ENCODE measurements at regions of chrX and their contacts with region 1.

Region 1: GRCh38 chrX:103310542-103311398 is at the start of gene BEX2:
- DNase-seq: peak; percentile 68
- H3K4me3 Mint-ChIP-seq: peak within 1 kb of the TSS; percentile 75
- H3K27ac Mint-ChIP-seq: peak within 1 kb of the TSS; percentile 29
- H3K4me1 Mint-ChIP-seq: no peaks in the 10 kb centered on the region
- H3K27me3 Mint-ChIP-seq: peaks cover 13% of the 10 kb centered on the region
- total RNA-seq, gene BEX2: 3.5 and 3.7 TPM in 2 replicates

Region 2: GRCh38 chrX:103254921-103255493 is 55.8 kb before region 1 on chrX and contains the start of gene TCEAL8:
- intact Hi-C with region 1: loop called (anchors 2 kb)
- DNase-seq: peak; percentile 32
- H3K4me3 Mint-ChIP-seq: peak within 1 kb of the TSS; percentile 98
- H3K27ac Mint-ChIP-seq: peak within 1 kb of the TSS; percentile 92
- H3K4me1 Mint-ChIP-seq: peaks cover 25% of the 10 kb centered on the region
- H3K27me3 Mint-ChIP-seq: peaks cover 8% of the 10 kb centered on the region
- total RNA-seq, gene TCEAL8: 20.7 and 21.9 TPM in 2 replicates

Region 3: GRCh38 chrX:103393487-103393886 is 82.7 kb after region 1 on chrX:
- intact Hi-C with region 1: no loop called
- DNase-seq: no peak
- H3K4me3 Mint-ChIP-seq: no peak overlapping the region
- H3K27ac Mint-ChIP-seq: no peak overlapping the region
- H3K4me1 Mint-ChIP-seq: no peaks in the 10 kb centered on the region
- H3K27me3 Mint-ChIP-seq: peaks cover 5% of the 10 kb centered on the region

Region 4: DNA sequence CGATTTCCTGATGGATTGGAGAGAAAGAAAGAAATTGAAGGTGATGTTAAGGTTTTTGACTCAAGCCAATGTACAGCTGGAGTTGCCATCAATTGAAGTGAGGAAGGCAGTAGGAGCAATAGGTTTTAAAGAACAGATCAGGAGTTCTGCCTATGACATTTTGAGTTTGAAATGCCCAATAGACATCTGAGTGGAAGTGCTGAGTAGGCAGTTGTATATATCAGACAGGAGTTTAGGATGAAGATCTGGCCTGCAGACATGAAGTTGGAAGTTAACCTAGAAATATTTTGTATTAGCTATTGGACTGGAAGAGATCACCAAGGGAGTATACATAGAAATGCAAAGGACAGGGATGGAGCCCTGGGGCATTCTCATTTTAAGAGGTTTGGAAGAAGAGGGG is 638.7 kb after region 1 on chrX:
- intact Hi-C with region 1: no loop called
- DNase-seq: no peak
- H3K4me3 Mint-ChIP-seq: no peak overlapping the region
- H3K27ac Mint-ChIP-seq: no peak overlapping the region
- H3K4me1 Mint-ChIP-seq: no peaks in the 10 kb centered on the region
- H3K27me3 Mint-ChIP-seq: no peaks in the 10 kb centered on the region

Measured in activated T-helper 1 cell treated with anti-CD3 and anti-CD28 coated beads, Interleukin-12 subunit alpha, Interleukin-12 subunit beta, Interleukin-2, Interleukin-4 antibody, amounts not matched to agents 30 ng/mL and 10 ng/mL and 1 ng/mL, durations not matched to agents 14 hours and 24 hours and 36 hours (primary cell).